ENCODE measurements at regions of chr3 and their contacts with region 1.

Region 1: GRCh38 chr3:76570436-76571057 is 469.4 kb upstream of the ROBO2 start:
- DNase-seq: no peak
- ATAC-seq: no peak
- H3K4me3 Mint-ChIP-seq: no peak overlapping the region
- H3K27ac Mint-ChIP-seq: no peak overlapping the region
- H3K4me1 Mint-ChIP-seq: peaks cover 7% of the 10 kb centered on the region
- H3K27me3 Mint-ChIP-seq: no peaks in the 10 kb centered on the region
- CTCF ChIP-seq: peak; percentile 24; the same call in 1 of the 2 replicates

Region 2: DNA sequence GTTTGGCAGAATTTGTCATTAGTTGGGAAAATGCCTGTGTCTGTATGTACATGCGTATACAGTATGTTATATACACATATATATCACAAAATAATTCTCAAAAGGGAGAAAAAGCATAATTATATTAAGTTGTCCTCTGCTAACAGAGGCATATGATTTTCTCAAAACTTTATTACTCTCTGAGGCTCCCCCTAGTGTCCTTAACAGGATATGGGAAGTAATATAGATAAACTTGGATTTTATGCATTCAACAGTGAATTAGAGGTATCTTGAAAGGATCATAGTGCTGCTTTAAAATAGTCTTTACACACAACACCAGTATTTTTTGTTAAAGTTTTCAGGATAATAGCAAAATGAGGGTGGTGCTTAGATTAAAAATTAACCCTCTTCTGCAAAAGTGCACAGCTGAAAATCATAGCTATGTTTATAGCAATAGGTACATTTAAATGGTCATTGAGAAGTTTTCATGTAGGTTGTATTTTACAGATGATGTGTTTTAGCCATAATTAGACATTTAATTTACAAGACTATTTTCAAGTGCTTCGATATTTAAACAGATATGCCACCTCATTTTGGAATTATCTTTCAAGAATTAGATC is 15.3 kb after region 1 on chr3:
- CTCF ChIA-PET with region 1: interaction called, 11 read pairs
- POLR2A ChIA-PET with region 1: no interaction called
- DNase-seq: no peak
- ATAC-seq: no peak; the same call in 1 of the 2 replicates
- H3K4me3 Mint-ChIP-seq: no peak overlapping the region
- H3K27ac Mint-ChIP-seq: no peak overlapping the region
- H3K4me1 Mint-ChIP-seq: 0 out of 2 replicates have a peak, but pooled peaks cover 2% of the 10 kb centered on the region
- H3K27me3 Mint-ChIP-seq: no peaks in the 10 kb centered on the region
- CTCF ChIP-seq: peak; percentile 42; the same call in 1 of the 2 replicates

Region 3: GRCh38 chr3:76610150-76610549 is 39.6 kb after region 1 on chr3:
- CTCF ChIA-PET with region 1: no interaction called
- POLR2A ChIA-PET with region 1: no interaction called
- DNase-seq: no peak
- ATAC-seq: no peak
- H3K4me3 Mint-ChIP-seq: no peak overlapping the region
- H3K27ac Mint-ChIP-seq: no peak overlapping the region
- H3K4me1 Mint-ChIP-seq: no peaks in the 10 kb centered on the region
- H3K27me3 Mint-ChIP-seq: no peaks in the 10 kb centered on the region
- CTCF ChIP-seq: no peak

Region 4: DNA sequence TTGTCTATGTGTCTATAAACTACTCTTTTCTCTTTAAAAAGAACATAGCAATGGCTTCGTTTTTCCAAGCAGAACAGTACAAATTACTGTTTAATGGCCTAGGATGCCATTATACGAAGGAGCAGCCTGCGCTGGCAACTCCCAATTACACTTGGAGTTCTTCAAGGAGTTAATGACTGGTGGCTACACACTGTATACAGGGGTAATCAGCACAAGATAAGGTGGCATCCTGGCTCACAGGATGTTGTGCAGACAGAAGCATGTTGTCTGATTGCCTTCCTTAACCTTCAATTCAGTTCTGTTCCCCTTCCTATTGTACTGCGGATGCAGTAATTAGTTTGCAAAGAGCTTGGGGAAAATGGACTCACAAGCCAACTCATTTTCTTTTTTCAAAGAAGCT is 218.7 kb after region 1 on chr3:
- CTCF ChIA-PET with region 1: no interaction called
- POLR2A ChIA-PET with region 1: no interaction called
- DNase-seq: no peak
- ATAC-seq: peak; percentile 93
- H3K4me3 Mint-ChIP-seq: no peak overlapping the region
- H3K27ac Mint-ChIP-seq: no peak overlapping the region
- H3K4me1 Mint-ChIP-seq: peaks cover 16% of the 10 kb centered on the region
- H3K27me3 Mint-ChIP-seq: no peaks in the 10 kb centered on the region
- CTCF ChIP-seq: no peak

Region 5: DNA sequence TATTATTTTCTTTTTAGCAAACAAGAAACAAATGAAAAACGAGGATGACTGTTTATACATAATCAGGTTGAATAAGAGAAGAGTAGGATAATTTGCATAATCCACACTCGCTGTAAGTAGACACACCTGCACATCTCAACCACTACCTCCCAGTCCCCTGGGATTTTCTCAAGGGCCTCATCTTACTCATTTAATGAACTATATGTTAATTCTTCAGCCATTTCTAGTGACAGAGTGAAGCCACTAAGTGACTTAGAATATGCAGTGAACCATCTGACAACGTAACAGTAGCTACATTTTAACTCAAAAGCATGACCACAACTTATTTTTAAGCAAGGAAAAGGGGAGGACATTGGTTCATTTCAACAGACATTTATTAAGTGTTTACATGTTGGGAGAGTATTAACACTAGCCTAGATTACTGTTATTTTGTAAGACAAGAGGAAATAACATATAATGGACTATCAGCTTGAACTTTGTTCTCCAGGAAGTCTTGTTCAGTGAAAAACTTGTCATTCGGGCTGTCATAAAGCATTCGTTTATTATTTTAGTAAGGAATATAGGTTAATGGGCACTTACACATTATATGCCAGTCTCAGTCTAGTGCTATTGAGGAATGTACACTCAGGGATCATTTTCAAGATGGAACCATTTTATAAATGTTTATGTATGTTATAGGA is 296.3 kb after region 1 on chr3:
- CTCF ChIA-PET with region 1: no interaction called
- POLR2A ChIA-PET with region 1: no interaction called
- DNase-seq: no peak
- ATAC-seq: no peak
- H3K4me3 Mint-ChIP-seq: no peak overlapping the region
- H3K27ac Mint-ChIP-seq: no peak overlapping the region
- H3K4me1 Mint-ChIP-seq: no peaks in the 10 kb centered on the region
- H3K27me3 Mint-ChIP-seq: no peaks in the 10 kb centered on the region
- CTCF ChIP-seq: no peak

Measured in WTC11 (cell line).